Dorsolateral prefrontal cortex (tissue), 120 donors: ENCODE measurements at regions of chr19 and their contacts with region 1.

Region 1: GRCh38 chr19:10960314-10961072 is at the start of gene SMARCA4:
- DNase-seq: peak; percentile 83 to 97 (median 94)
- H3K4me3 ChIP-seq: peak within 1 kb of the TSS; percentile 59 to 99 (median 91)
- H3K27ac ChIP-seq: peak within 1 kb of the TSS; percentile 51 to 99 (median 94)
- H3K27me3 ChIP-seq: no peaks in the 10 kb centered on the region
- CTCF ChIP-seq: peak in 18 of 56 donors; percentile 13 to 47 (median 22)
- total RNA-seq, gene SMARCA4: 103 to 170 (median 136) TPM

Region 2: DNA sequence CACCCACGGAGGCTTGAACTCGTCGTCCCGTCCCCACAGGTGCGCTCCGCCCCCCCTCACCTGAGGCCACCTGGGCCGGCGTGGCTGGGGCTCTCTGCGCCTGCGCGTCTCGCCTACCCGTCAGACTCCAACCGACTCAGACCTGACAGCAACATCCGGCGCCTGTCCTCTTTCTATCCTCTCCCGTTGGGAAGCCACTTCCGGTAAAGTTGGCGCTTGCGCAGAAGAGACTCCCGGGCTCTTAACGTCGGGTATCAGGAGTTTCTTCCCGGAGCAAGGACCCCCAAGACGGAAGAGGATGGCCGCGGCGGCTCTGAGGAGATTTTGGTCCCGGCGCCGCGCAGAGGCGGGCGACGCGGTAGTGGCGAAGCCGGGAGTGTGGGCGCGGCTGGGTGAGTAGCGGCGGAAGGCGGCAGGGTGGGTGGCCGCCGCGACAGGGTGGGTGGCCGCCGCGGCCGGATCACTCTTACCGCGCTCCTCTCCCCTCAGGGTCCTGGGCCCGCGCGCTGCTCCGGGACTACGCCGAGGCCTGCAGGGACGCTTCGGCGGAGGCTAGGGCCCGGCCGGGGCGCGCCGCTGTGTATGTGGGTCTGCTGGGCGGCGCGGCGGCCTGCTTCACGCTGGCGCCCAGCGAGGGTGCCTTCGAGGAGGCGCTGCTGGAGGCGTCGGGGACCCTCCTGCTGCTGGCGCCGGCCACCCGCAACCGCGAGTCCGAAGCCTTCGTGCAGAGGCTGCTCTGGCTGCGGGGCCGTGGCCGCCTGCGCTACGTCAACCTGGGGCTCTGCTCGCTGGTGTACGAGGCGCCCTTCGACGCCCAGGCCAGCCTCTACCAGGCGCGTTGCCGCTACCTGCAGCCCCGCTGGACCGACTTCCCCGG is 31.7 kb before region 1 on chr19 and contains the starts of genes TIMM29 and YIPF2:
- intact Hi-C with region 1: loop called in 1 of 2 experiments (anchors 5 kb)
- DNase-seq: peak; percentile 95 to 98 (median 98)
- H3K4me3 ChIP-seq: peak within 1 kb of the TSS; percentile 77 to 100 (median 96)
- H3K27ac ChIP-seq: peak within 1 kb of the TSS; percentile 34 to 94 (median 88)
- H3K27me3 ChIP-seq: no peaks in the 10 kb centered on the region
- CTCF ChIP-seq: peak in 39 of 56 donors; percentile 5 to 60 (median 35)
- total RNA-seq, gene TIMM29: 15.6 to 33.0 (median 23.3) TPM
- total RNA-seq, gene YIPF2: 22.1 to 45.7 (median 32.1) TPM

Region 3: GRCh38 chr19:11090054-11090900 is 129.8 kb after region 1 on chr19:
- intact Hi-C with region 1: loop called in 1 of 2 experiments (anchors 10 kb)
- DNase-seq: peak; percentile 94 to 99 (median 98)
- H3K4me3 ChIP-seq: peak overlapping the region; percentile 55 to 99 (median 86)
- H3K27ac ChIP-seq: peak overlapping the region; percentile 83 to 99 (median 98)
- H3K27me3 ChIP-seq: no peaks in the 10 kb centered on the region
- CTCF ChIP-seq: peak in 14 of 56 donors; percentile 2 to 42 (median 12)